Right cardiac atrium (tissue), 5 donors: ENCODE measurements at regions of chr2 and their contacts with region 1.

Region 1: DNA sequence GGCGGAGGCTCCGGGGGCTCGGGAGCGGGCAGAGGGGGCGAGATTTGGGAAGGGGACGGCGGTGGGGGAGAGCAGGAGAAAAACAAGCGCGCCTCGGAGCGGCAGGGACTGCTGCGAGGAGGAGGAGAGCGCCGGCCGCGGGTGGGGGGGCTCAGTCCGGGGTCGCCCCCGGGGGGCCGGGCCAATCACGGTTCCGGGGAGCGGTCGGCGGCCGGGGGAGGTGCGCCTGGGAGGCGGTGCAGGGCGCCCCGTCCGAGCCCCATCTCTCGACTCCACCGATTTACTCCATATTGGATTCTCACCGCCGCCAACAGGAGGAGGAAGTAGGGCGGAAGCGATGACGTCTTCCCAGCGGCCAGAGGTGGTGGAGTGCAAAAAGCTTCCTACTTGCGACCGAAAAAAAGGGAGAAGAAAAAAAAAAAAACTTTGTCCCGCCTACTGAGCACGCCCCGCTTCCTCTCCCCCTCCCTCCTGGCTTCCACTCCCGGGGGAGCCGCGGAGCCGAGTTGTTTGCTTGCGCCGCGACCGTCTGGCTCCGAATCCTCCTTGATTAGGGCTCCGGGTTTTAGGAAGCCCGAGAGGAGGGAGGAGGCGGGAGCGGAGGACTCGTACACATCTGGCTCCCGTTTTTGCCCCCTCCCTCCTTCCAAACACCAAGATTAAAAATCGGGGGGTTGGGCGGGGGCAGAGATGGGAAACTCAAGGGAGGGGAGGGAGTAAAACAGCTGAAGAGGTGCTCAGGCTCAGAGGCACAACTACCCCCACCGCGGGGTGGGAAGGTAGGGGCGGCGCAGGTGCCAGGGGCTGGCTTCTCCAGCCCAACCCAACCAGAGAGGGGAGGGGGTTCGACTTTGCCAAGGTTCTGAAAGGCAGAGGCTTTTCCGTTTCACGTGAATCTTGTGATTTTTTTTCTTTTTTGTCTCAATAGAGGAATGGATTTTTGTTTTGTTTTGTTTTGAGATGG is at the start of gene SPRED2:
- DNase-seq: peak; percentile 97 to 98 (median 98)
- ATAC-seq: peak; percentile 75
- H3K4me3 ChIP-seq: peak within 1 kb of the TSS; percentile 93
- H3K27ac ChIP-seq: peak within 1 kb of the TSS; percentile 83
- H3K4me1 ChIP-seq: peaks cover 6% of the 10 kb centered on the region
- H3K27me3 ChIP-seq: no peaks in the 10 kb centered on the region
- total RNA-seq, gene SPRED2: 14.3 to 17.9 (median 16.4) TPM

Region 2: GRCh38 chr2:65227425-65228262 is 204.9 kb before region 1 on chr2 and contains the start of gene ACTR2:
- intact Hi-C with region 1: no loop called
- DNase-seq: peak; percentile 96 to 98 (median 98)
- ATAC-seq: peak; percentile 99
- H3K4me3 ChIP-seq: peak within 1 kb of the TSS; percentile 95
- H3K27ac ChIP-seq: peak within 1 kb of the TSS; percentile 96
- H3K4me1 ChIP-seq: no peaks in the 10 kb centered on the region
- H3K27me3 ChIP-seq: no peaks in the 10 kb centered on the region
- total RNA-seq, gene ACTR2: 104 to 133 (median 113) TPM

Region 3: DNA sequence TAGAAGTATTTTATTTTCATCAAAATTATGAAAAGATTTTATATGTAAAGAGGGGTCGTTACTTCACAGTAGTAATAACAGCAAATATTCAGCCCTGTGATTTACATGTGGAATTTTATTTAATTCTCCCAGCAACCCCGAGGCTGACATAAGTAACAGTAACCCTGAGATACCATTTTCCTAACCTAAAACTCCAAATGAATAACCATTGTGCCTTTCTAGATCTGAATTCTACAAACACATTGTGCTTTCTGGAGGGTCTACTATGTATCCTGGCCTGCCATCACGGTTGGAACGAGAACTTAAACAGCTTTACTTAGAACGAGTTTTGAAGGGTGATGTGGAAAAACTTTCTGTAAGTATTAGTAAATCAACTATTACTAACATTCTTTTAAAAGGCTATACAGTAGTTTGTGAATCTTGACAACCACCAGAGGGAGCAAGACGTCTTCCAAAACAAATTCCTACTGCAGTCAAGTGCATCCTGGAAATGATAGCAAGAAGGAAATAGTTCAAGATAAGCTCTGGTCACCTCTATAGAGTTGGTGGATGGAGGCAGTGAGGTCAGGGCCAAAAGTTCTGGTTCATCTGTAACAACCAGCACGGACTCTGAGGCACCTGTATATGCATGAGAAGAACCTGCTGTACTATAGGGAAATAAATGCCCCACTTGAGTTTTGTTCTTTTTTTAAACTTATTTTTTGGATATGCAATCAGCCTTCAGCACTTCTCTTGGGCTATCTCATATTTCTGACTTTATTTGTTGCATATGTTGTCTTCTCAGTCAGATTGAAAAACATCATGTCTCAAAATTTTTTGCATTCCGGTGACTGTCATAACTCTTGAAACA is 167.5 kb before region 1 on chr2:
- intact Hi-C with region 1: loop called in 2 of 4 experiments (anchors 5 to 10 kb)
- DNase-seq: no peak
- ATAC-seq: peak; percentile 78 to 79
- H3K4me3 ChIP-seq: no peak overlapping the region
- H3K27ac ChIP-seq: no peak overlapping the region
- H3K4me1 ChIP-seq: no peaks in the 10 kb centered on the region
- H3K27me3 ChIP-seq: no peaks in the 10 kb centered on the region

Region 4: GRCh38 chr2:65278531-65278981 is 154.0 kb before region 1 on chr2:
- intact Hi-C with region 1: loop called in 2 of 4 experiments (anchors 10 kb)
- DNase-seq: no peak
- ATAC-seq: peak; percentile 34 to 38
- H3K4me3 ChIP-seq: no peak overlapping the region
- H3K27ac ChIP-seq: no peak overlapping the region
- H3K4me1 ChIP-seq: peaks cover 16% of the 10 kb centered on the region
- H3K27me3 ChIP-seq: no peaks in the 10 kb centered on the region

Region 5: GRCh38 chr2:65377556-65378192 is 54.8 kb before region 1 on chr2:
- intact Hi-C with region 1: loop called in 1 of 4 experiments (anchors 10 kb)
- DNase-seq: no peak
- ATAC-seq: peak in 1 of 2 donors; percentile 65
- H3K4me3 ChIP-seq: no peak overlapping the region
- H3K27ac ChIP-seq: no peak overlapping the region
- H3K4me1 ChIP-seq: peaks cover 10% of the 10 kb centered on the region
- H3K27me3 ChIP-seq: no peaks in the 10 kb centered on the region

Region 6: DNA sequence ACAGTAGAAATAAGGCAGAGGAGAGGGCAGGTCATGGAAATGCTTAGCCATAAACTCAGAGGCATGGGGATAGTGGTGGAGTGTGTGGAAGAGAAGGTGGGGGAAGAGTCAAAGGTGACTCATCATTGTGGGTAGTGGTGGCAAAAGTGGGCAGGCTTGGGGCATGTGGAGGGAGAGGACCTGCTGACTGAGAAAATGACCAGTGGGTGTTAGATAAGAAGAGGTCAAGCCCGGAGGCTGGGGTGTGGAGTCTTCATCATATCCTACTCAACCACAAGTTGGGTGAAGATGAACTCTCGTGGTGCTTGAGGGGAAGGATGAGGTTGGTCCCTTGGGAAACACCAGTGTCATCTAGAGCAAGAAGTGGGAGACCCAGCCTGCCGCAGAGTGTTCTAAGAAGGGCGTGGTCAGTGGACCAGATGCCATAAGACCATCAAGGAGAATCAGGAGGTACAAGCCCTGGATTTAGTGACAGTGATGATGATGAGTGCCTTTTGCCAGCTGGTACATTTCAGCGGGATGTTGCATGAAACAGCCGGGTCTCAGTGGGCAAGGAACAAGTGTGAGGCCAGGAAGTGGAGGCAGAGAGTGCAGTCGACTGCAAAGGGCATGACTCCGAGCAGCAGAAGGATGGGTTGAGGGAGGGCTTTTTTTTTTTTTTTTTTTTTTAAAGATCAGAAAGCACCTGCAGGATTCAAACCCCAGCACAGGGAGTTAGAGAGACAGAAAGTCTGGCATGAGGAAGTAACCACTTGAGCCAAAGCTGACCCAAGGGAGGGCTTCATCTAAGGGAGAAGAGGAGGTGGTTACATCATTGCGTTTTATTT is 122.5 kb after region 1 on chr2:
- intact Hi-C with region 1: loop called in 3 of 4 experiments (anchors 5 to 10 kb)
- DNase-seq: no peak
- ATAC-seq: no peak
- H3K4me3 ChIP-seq: no peak overlapping the region
- H3K27ac ChIP-seq: no peak overlapping the region
- H3K4me1 ChIP-seq: no peaks in the 10 kb centered on the region
- H3K27me3 ChIP-seq: no peaks in the 10 kb centered on the region